ENCODE measurements at regions of chr19 and their contacts with region 1.

Region 1: DNA sequence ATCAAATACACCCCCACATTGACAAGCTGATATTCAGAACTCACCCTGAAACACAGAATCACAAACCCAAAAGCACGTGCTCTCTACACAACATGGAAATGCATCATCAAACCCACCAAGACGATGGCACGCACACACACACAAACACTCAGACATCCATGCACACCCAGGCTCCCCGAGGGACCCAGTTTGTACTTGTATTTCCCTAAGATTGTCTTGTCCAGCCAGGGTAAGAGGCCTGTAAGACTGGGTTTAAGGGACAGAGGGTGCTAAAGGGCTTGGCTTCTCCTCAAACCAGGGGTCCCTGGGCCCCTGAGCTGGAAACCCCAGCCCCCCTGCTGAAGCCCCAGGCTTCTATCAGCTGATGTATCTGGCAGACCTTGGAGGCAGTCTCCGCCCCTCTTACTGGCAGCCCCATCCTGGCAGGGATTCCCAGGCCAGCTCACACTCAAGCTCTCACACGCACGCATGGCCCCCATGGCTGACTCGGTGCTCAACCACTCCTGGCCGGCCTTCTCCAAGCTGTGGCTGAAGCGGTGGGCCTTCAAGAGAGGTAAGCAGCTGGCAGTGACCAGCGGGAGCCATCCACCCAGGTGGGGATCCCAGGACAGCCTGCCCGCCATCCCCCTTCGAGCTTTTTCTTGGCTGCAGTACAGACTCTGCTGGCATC is 6.5 kb downstream of the ARHGEF18 start:
- DNase-seq: no peak
- ATAC-seq: peak in 1 of 2 experiments; percentile 36; a peak in 2 of 6 replicates
- H3K4me3 ChIP-seq: no peak overlapping the region
- H3K27ac ChIP-seq: no peak overlapping the region
- H3K4me1 ChIP-seq: no peaks in the 10 kb centered on the region
- CTCF ChIP-seq: no peak
- EP300 ChIP-seq: no peak
- POLR2A ChIP-seq: no peak
- RAD21 ChIP-seq: no peak

Region 2: DNA sequence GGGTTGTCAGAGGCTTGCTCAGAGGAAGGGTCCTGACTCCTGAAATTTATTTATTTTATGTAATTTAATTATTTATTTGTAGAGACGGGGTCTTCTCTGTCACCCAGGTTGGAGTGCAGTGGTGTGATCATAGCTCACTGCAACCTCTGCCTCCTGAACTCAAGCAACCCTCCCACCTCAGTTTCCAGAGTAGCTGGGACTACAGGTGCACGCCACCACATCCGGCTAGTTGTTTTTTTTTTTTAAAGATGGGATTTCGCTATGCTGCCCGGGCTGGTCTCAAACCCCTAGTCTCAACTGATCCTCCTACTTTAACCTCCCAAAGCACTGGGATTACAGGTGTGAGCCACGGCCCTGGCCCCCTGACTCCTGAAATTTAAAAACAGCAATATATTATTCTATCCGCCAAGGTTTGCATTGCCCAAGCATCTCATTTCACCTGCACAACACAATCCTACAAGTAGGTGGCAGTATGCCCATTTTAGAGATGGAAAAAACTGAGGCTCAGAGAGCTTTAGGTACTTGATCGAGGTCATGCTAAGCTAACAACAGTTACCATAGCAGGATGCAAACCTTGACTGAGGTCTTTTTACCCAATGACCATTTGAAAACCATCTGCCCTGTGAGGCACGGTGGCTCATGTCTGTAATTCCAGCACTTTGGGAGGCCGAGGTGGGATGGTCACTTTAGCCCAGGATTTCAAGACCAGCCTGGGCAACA is 11.6 kb after region 1 on chr19:
- CTCF ChIA-PET with region 1: interaction called, 27 read pairs
- POLR2A ChIA-PET with region 1: no interaction called
- DNase-seq: peak; percentile 41 to 70
- ATAC-seq: peak; percentile 48 to 56; a peak in 2 of 6 replicates
- H3K4me3 ChIP-seq: no peak overlapping the region
- H3K27ac ChIP-seq: no peak overlapping the region
- H3K4me1 ChIP-seq: no peaks in the 10 kb centered on the region
- CTCF ChIP-seq: peak; percentile 45
- EP300 ChIP-seq: no peak
- POLR2A ChIP-seq: no peak
- RAD21 ChIP-seq: peak; percentile 29 to 62; a peak in 3 of 5 replicates

Region 3: DNA sequence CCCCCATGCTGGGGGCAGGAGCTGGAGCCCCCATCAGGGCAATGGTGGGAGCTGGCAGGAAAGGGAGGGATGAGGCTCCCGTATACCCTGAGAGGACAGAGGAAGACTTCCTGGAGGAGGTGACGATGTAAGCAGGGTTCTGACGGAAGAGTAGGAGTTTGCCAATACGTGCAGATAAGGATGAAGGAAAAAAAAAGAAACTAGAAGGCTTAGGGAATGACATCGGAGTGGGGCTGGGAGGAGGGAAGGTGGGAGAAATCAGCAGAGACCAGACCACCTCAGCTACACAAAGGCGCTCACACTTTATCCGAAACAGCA is 25.7 kb after region 1 on chr19:
- CTCF ChIA-PET with region 1: interaction called, 21 read pairs
- POLR2A ChIA-PET with region 1: no interaction called
- DNase-seq: no peak
- ATAC-seq: no peak
- H3K4me3 ChIP-seq: no peak overlapping the region
- H3K27ac ChIP-seq: peak overlapping the region in 1 of 2 experiments; percentile 26; a peak in 1 of 6 replicates
- H3K4me1 ChIP-seq: peaks cover 3% of the 10 kb centered on the region; the same call in 2 of the 3 replicates
- CTCF ChIP-seq: no peak
- EP300 ChIP-seq: no peak
- POLR2A ChIP-seq: no peak
- RAD21 ChIP-seq: no peak

Region 4: GRCh38 chr19:7386308-7386707 is 31.0 kb after region 1 on chr19:
- CTCF ChIA-PET with region 1: interaction called, 21 read pairs
- POLR2A ChIA-PET with region 1: no interaction called
- DNase-seq: peak; percentile 37 to 45
- ATAC-seq: peak; percentile 71 to 80
- H3K4me3 ChIP-seq: no peak overlapping the region
- H3K27ac ChIP-seq: peak overlapping the region; percentile 39 to 67; a peak in 4 of 6 replicates
- H3K4me1 ChIP-seq: peaks cover 22% of the 10 kb centered on the region
- CTCF ChIP-seq: peak; percentile 27
- EP300 ChIP-seq: no peak
- POLR2A ChIP-seq: no peak
- RAD21 ChIP-seq: peak; percentile 43 to 48

Region 5: GRCh38 chr19:7799640-7800355 is 444.5 kb after region 1 on chr19:
- CTCF ChIA-PET with region 1: interaction called, 10 read pairs
- POLR2A ChIA-PET with region 1: no interaction called
- DNase-seq: peak; percentile 45 to 67
- ATAC-seq: peak; percentile 77 to 83
- H3K4me3 ChIP-seq: peak overlapping the region; percentile 24; the same call in 1 of the 3 replicates
- H3K27ac ChIP-seq: no peak overlapping the region
- H3K4me1 ChIP-seq: no peaks in the 10 kb centered on the region
- CTCF ChIP-seq: peak; percentile 60
- EP300 ChIP-seq: no peak
- POLR2A ChIP-seq: no peak
- RAD21 ChIP-seq: peak; percentile 68 to 75

Measured in A549 (cell line).